ENCODE measurements at regions of chr3 and their contacts with region 1.

Region 1: DNA sequence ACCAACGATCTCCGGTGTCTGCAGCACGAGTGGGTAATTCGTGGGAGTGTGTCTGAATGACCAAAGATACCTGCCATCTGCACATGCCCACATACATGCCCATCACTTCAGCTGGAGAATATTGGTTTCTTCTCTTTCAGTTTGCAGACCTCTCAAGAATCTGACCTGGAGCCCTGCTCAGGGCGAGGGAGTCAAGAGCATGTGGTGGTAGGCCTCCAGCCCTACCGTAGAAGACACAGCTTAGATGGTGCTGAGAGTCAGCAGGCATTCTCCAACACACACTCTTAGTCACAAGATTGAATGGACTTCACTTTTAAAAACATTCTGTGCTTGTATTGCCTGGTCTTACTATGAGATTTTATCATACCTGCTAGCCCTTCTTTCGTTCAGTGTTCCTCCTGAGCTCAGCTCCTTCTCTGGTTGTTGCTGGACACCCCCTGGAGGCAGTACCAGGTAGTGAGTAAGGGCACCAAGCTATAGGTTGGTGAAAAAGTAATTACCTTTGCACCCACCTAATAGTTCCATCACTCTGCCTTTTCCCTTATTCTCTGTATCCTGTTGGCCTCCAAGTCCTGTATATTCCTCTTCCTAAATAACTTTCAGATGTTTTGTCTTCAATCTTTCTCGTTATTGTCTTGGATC is 252.0 kb downstream of the CACNA2D3 start:
- DNase-seq: no peak
- ATAC-seq: no peak
- H3K4me3 ChIP-seq: no peak overlapping the region
- H3K4me3 Mint-ChIP-seq: no peak overlapping the region
- H3K27ac ChIP-seq: no peak overlapping the region
- H3K27ac Mint-ChIP-seq: no peak overlapping the region
- H3K4me1 ChIP-seq: no peaks in the 10 kb centered on the region
- H3K4me1 Mint-ChIP-seq: peaks cover 0 to 5% (median 0%) of the 10 kb centered on the region in 7 donors
- H3K27me3 ChIP-seq: peaks cover 0 to 3% of the 10 kb centered on the region in 2 donors
- H3K27me3 Mint-ChIP-seq: peaks cover 0 to 7% (median 5%) of the 10 kb centered on the region in 5 donors

Region 2: DNA sequence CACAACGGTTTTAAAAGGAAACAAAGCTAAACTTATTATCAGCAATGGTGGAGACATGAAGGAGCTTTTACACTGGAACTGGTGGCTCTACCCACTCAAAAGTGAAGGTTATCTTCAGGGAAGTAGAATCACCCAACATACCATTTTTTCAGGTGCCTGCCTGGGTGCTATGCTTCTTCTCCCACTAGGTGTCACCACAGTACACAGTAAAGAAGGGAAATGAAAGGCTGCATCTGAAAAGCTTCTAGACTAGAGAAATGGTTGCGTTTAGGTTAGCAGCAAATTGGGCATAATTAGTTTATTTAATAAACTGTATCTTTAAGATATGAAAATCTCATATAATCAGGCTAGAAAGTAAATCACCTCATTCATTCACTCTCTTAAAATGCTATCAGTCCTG is 435.7 kb before region 1 on chr3:
- CTCF ChIA-PET with region 1: no interaction called
- POLR2A ChIA-PET with region 1: no interaction called
- intact Hi-C with region 1: loop called in 1 of 2 experiments (anchors 10 kb)
- DNase-seq: peak in 6 of 9 donors; percentile 10 to 41 (median 25)
- ATAC-seq: peak; percentile 71
- H3K4me3 ChIP-seq: no peak overlapping the region
- H3K4me3 Mint-ChIP-seq: no peak overlapping the region
- H3K27ac ChIP-seq: no peak overlapping the region
- H3K27ac Mint-ChIP-seq: no peak overlapping the region
- H3K4me1 ChIP-seq: no peaks in the 10 kb centered on the region
- H3K4me1 Mint-ChIP-seq: no peaks in the 10 kb centered on the region
- H3K27me3 ChIP-seq: no peaks in the 10 kb centered on the region
- H3K27me3 Mint-ChIP-seq: peaks cover 7 to 64% (median 37%) of the 10 kb centered on the region in 5 donors